Calu3 (cell line): ENCODE measurements at regions of chr3 and their contacts with region 1.

Region 1: GRCh38 chr3:36700537-36701248 is 63.7 kb downstream of the DCLK3 start:
- DNase-seq: peak; percentile 75
- H3K4me3 Mint-ChIP-seq: no peak overlapping the region
- H3K27ac Mint-ChIP-seq: no peak overlapping the region
- H3K4me1 Mint-ChIP-seq: peaks cover 10% of the 10 kb centered on the region
- H3K27me3 Mint-ChIP-seq: no peaks in the 10 kb centered on the region
- CTCF ChIP-seq: peak; percentile 73

Region 2: GRCh38 chr3:35965908-35966307 is 734.8 kb before region 1 on chr3:
- CTCF ChIA-PET with region 1: interaction called, 7 read pairs
- intact Hi-C with region 1: loop called (anchors 1 kb)
- DNase-seq: peak; percentile 7
- H3K4me3 Mint-ChIP-seq: no peak overlapping the region
- H3K27ac Mint-ChIP-seq: no peak overlapping the region
- H3K4me1 Mint-ChIP-seq: no peaks in the 10 kb centered on the region
- H3K27me3 Mint-ChIP-seq: no peaks in the 10 kb centered on the region
- CTCF ChIP-seq: no peak

Region 3: DNA sequence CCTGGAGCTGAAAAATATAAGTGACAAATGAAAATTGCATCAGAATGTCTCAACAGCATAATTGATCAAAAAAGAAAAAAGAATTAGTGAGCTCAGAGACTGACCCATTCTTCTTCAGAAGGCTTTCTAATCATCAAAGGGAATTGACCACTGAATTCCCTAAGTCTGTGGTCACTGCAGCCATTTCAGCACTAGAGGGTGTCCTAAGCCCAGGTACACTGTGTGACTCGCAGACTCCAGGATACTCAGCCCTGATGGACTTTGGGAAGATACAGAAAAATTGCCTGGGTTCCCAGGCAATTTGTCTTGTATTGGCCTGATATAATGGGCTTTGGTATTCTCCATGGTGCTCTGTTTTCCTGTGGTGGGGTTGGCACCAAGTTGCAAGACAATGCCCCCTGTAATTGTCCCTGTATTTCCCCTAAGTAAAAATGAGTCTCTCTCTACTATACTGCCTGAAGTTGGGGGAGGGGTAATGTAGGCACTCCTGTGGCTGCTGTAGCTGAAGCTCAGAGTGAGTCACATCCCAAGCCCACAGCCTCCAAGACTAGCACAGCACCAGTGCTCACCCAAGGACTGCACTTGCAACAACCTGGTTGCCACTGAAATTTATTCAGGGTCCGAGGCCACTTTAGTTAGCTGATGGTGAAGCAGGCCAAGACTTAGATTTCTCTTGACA is 576.4 kb before region 1 on chr3:
- CTCF ChIA-PET with region 1: no interaction called
- intact Hi-C with region 1: loop called (anchors 1 kb)
- DNase-seq: peak; percentile 64
- H3K4me3 Mint-ChIP-seq: no peak overlapping the region
- H3K27ac Mint-ChIP-seq: no peak overlapping the region
- H3K4me1 Mint-ChIP-seq: peaks cover 6% of the 10 kb centered on the region
- H3K27me3 Mint-ChIP-seq: no peaks in the 10 kb centered on the region
- CTCF ChIP-seq: peak; percentile 53

Region 4: DNA sequence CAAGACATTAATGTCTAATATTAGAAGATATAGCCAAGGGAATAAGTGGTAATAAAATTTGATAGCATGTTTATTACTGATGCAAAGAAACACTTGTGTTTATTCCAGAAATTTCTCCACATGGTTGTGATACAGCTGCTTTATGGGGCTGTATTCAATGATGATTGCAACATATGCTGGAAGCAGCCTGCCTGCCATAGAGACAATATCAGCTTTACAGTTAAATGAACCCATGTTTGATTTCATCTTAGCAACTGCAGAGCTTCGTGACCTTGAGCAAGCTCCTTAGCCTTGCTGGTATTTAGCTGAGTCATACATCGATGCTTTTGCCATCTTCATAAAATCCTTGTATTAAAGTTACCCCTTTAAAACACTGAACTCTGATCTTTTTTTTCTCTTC is 488.4 kb before region 1 on chr3:
- CTCF ChIA-PET with region 1: no interaction called
- intact Hi-C with region 1: loop called (anchors 5 kb)
- DNase-seq: no peak
- H3K4me3 Mint-ChIP-seq: no peak overlapping the region
- H3K27ac Mint-ChIP-seq: no peak overlapping the region
- H3K4me1 Mint-ChIP-seq: no peaks in the 10 kb centered on the region
- H3K27me3 Mint-ChIP-seq: no peaks in the 10 kb centered on the region
- CTCF ChIP-seq: no peak

Region 5: DNA sequence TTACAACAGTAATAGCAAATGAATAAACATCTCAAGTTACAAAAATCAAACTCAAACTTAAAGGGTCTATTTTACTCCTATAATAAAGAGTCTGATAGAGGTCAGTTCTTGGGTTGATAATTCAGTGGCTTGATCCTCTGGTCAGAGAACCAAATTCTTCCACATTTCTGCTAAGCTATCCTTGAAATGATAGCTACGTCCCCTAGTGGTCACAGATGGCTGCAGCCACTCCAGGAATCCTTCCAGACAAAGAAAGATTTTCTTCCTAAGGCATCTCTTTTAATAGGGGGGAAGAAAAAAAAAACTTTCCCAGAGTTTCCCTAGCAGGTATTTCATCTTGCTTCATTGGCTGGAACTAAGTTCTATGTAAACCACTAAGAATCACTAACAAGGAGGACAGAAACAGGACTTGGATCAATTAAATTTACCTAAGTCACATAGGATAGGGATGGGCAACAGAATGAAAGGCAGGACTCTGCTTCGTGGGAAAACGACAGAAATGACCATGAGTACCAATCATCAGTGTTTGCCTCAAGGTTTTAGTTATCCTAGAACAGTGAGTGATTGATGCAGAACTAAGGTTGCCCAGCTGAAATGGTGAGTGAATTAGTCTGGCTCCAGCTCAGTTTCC is 159.7 kb before region 1 on chr3:
- CTCF ChIA-PET with region 1: interaction called, 3 read pairs
- intact Hi-C with region 1: loop called (anchors 1 kb)
- DNase-seq: peak; percentile 34
- H3K4me3 Mint-ChIP-seq: no peak overlapping the region
- H3K27ac Mint-ChIP-seq: no peak overlapping the region
- H3K4me1 Mint-ChIP-seq: no peaks in the 10 kb centered on the region
- H3K27me3 Mint-ChIP-seq: no peaks in the 10 kb centered on the region
- CTCF ChIP-seq: peak; percentile 53

Region 6: DNA sequence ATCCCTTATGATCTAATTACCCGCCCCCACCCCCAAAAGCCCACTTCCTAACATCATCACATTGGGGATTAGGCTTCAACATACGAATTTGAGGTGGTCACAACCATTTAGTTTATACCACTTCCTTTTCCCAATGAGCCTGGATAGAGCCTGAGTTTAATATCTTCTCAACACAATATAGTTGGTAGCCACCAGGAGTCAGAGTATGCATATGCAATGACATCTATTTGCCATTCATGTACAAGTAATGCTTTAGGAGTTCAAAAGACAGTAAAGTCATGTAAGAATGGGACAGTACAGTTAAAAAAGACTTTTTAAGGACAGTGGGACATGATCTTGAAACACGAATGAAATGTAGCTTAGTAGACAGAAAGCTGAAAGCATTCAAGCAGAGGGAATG is 108.7 kb before region 1 on chr3:
- CTCF ChIA-PET with region 1: no interaction called
- intact Hi-C with region 1: loop called (anchors 1 kb)
- DNase-seq: no peak
- H3K4me3 Mint-ChIP-seq: no peak overlapping the region
- H3K27ac Mint-ChIP-seq: no peak overlapping the region
- H3K4me1 Mint-ChIP-seq: peaks cover 5% of the 10 kb centered on the region
- H3K27me3 Mint-ChIP-seq: no peaks in the 10 kb centered on the region
- CTCF ChIP-seq: no peak